Activated naive CD4-positive, alpha-beta T cell treated with anti-CD3 and anti-CD28 coated beads, Interleukin-2, amount 10 ng/mL, durations not matched to agents 7 days and 5 days (primary cell): ENCODE measurements at regions of chr11 and their contacts with region 1.

Region 1: GRCh38 chr11:12235947-12236743 is 125.8 kb downstream of the MICAL2 start:
- DNase-seq: peak; percentile 65
- H3K4me3 Mint-ChIP-seq: peak overlapping the region; percentile 39
- H3K27ac Mint-ChIP-seq: peak overlapping the region; percentile 85
- H3K4me1 Mint-ChIP-seq: peaks cover 32% of the 10 kb centered on the region
- H3K27me3 Mint-ChIP-seq: no peaks in the 10 kb centered on the region

Region 2: GRCh38 chr11:12043959-12044819 is 192.0 kb before region 1 on chr11:
- CTCF ChIA-PET with region 1: interaction called, 120 read pairs
- DNase-seq: peak; percentile 72
- H3K4me3 Mint-ChIP-seq: no peak overlapping the region
- H3K27ac Mint-ChIP-seq: no peak overlapping the region
- H3K4me1 Mint-ChIP-seq: peaks cover 4% of the 10 kb centered on the region
- H3K27me3 Mint-ChIP-seq: peaks cover 48% of the 10 kb centered on the region

Region 3: GRCh38 chr11:12122083-12122482 is 114.1 kb before region 1 on chr11:
- CTCF ChIA-PET with region 1: interaction called, 48 read pairs
- DNase-seq: no peak
- H3K4me3 Mint-ChIP-seq: no peak overlapping the region
- H3K27ac Mint-ChIP-seq: no peak overlapping the region
- H3K4me1 Mint-ChIP-seq: peaks cover 50% of the 10 kb centered on the region
- H3K27me3 Mint-ChIP-seq: no peaks in the 10 kb centered on the region

Region 4: DNA sequence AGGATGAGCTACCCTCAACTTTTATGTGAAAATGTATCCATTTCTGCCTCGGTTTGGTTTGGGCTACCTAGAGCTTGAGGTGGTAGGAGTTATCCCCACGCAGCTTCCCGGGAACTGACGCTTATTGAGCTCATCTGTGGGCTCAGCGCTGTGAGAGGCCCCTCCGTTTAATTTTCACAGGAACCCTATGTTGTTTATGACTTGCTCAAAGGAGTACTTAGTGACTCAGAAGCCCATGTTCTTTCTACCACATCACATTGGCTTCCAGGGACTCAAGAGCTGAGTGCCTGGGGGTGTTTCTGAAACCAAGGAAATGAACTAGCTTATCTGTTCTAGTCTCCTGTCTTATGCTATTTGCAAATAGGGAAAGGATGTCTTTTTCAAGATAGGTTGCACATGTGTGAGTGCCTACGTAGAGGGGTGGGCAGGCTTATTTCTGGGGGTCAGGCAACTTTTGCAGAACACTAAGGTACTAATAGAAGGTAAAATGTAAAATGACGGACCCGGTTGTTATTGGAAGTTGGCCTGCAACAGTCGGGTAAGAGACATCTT is 85.2 kb before region 1 on chr11:
- CTCF ChIA-PET with region 1: interaction called, 13 read pairs
- DNase-seq: no peak
- H3K4me3 Mint-ChIP-seq: no peak overlapping the region
- H3K27ac Mint-ChIP-seq: peak overlapping the region; percentile 80
- H3K4me1 Mint-ChIP-seq: peaks cover 59% of the 10 kb centered on the region
- H3K27me3 Mint-ChIP-seq: no peaks in the 10 kb centered on the region

Region 5: GRCh38 chr11:12170984-12171383 is 65.2 kb before region 1 on chr11:
- CTCF ChIA-PET with region 1: interaction called, 11 read pairs
- DNase-seq: no peak
- H3K4me3 Mint-ChIP-seq: no peak overlapping the region
- H3K27ac Mint-ChIP-seq: no peak overlapping the region
- H3K4me1 Mint-ChIP-seq: peaks cover 41% of the 10 kb centered on the region
- H3K27me3 Mint-ChIP-seq: no peaks in the 10 kb centered on the region

Region 6: GRCh38 chr11:12224537-12224893 is 11.6 kb before region 1 on chr11:
- CTCF ChIA-PET with region 1: interaction called, 38 read pairs
- DNase-seq: peak; percentile 94
- H3K4me3 Mint-ChIP-seq: peak overlapping the region; percentile 37
- H3K27ac Mint-ChIP-seq: peak overlapping the region; percentile 86
- H3K4me1 Mint-ChIP-seq: peaks cover 48% of the 10 kb centered on the region
- H3K27me3 Mint-ChIP-seq: no peaks in the 10 kb centered on the region

Region 7: GRCh38 chr11:12372111-12372510 is 136.0 kb after region 1 on chr11:
- CTCF ChIA-PET with region 1: no interaction called
- DNase-seq: no peak
- H3K4me3 Mint-ChIP-seq: no peak overlapping the region
- H3K27ac Mint-ChIP-seq: no peak overlapping the region
- H3K4me1 Mint-ChIP-seq: peaks cover 12% of the 10 kb centered on the region
- H3K27me3 Mint-ChIP-seq: peaks cover 33% of the 10 kb centered on the region

Region 8: GRCh38 chr11:12516387-12517105 is 280.4 kb after region 1 on chr11:
- CTCF ChIA-PET with region 1: no interaction called
- DNase-seq: no peak
- H3K4me3 Mint-ChIP-seq: no peak overlapping the region
- H3K27ac Mint-ChIP-seq: no peak overlapping the region
- H3K4me1 Mint-ChIP-seq: no peaks in the 10 kb centered on the region
- H3K27me3 Mint-ChIP-seq: peaks cover 13% of the 10 kb centered on the region

Region 9: DNA sequence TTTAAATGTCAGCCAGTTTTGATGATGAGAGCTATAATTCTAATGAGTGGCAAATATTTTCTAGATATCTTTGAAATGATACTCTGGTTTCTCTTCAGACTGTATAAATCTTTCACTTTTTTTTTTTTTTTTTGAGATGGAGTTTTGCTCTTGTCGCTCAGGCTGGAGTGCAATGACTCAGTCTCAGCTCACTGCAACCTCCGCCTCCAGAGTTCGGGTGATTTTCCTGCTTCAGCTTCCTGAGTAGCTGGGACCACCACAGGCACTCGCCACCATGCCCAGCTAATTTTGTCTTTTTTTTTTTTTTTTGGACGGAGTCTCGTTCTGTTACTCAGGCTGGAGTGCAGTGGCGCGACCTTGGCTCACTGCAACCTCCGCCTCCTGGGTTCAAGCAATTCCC is 551.7 kb after region 1 on chr11:
- CTCF ChIA-PET with region 1: no interaction called
- DNase-seq: no peak
- H3K4me3 Mint-ChIP-seq: no peak overlapping the region
- H3K27ac Mint-ChIP-seq: no peak overlapping the region
- H3K4me1 Mint-ChIP-seq: no peaks in the 10 kb centered on the region
- H3K27me3 Mint-ChIP-seq: peaks cover 33% of the 10 kb centered on the region